ENCODE measurements at regions of chr2 and their contacts with region 1.

Region 1: GRCh38 chr2:181528441-181528840 is 71.3 kb downstream of the ITGA4 start:
- DNase-seq: no peak
- H3K4me3 ChIP-seq: no peak overlapping the region
- H3K4me3 Mint-ChIP-seq: no peak overlapping the region
- H3K27ac ChIP-seq: no peak overlapping the region
- H3K27ac Mint-ChIP-seq: peak overlapping the region in 1 of 8 donors; percentile 19
- H3K4me1 ChIP-seq: no peaks in the 10 kb centered on the region
- H3K4me1 Mint-ChIP-seq: peaks cover 8 to 21% (median 15%) of the 10 kb centered on the region in 3 donors
- H3K27me3 ChIP-seq: no peaks in the 10 kb centered on the region
- H3K27me3 Mint-ChIP-seq: no peaks in the 10 kb centered on the region

Region 2: DNA sequence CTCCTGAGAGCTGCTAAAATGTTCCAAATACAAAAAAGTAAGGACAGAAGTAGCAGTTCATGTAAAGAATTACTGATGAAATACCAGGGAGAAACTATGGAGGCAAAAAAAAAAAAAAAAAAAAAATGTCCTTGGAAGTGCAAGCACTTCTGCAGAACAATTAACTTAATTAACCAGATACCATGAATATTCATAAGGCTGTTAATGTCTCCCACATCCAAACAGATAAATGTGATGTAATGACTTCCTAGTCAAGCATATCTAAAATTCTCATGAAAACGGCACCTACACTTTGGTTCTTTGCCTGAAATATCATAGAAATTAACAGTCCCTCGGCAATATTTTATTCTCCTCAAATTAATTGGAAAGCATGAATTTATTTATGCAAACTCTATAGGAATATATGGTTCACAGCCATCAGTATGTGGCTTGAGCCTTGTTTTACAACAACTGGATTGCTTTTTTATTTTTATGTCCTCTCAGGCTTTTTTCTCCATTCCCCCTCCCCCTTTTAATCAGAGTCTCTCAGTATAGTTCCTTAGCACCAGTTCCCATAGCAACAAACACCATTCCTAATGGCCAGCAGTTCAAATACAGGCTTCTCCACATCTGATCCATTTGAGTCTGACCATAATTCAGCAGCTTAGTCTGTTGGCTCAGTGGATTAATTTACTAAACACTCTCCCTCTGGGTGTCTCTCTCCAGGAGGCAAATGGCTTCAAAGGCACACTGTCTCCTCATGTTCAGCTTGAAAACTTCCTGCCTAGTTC is 25.8 kb after region 1 on chr2:
- CTCF ChIA-PET with region 1: no interaction called
- POLR2A ChIA-PET with region 1: interaction called, 15 read pairs
- DNase-seq: no peak
- H3K4me3 ChIP-seq: no peak overlapping the region
- H3K4me3 Mint-ChIP-seq: no peak overlapping the region
- H3K27ac ChIP-seq: no peak overlapping the region
- H3K27ac Mint-ChIP-seq: no peak overlapping the region
- H3K4me1 ChIP-seq: no peaks in the 10 kb centered on the region
- H3K4me1 Mint-ChIP-seq: no peaks in the 10 kb centered on the region
- H3K27me3 ChIP-seq: no peaks in the 10 kb centered on the region
- H3K27me3 Mint-ChIP-seq: no peaks in the 10 kb centered on the region

Measured in CD8-positive, alpha-beta memory T cell (primary cell).